ENCODE measurements at regions of chr22 and their contacts with region 1.

Region 1: GRCh38 chr22:38744981-38745380 is 10.8 kb downstream of the SUN2 start:
- DNase-seq: no peak
- H3K4me3 ChIP-seq: no peak overlapping the region
- CTCF ChIP-seq: no peak

Region 2: DNA sequence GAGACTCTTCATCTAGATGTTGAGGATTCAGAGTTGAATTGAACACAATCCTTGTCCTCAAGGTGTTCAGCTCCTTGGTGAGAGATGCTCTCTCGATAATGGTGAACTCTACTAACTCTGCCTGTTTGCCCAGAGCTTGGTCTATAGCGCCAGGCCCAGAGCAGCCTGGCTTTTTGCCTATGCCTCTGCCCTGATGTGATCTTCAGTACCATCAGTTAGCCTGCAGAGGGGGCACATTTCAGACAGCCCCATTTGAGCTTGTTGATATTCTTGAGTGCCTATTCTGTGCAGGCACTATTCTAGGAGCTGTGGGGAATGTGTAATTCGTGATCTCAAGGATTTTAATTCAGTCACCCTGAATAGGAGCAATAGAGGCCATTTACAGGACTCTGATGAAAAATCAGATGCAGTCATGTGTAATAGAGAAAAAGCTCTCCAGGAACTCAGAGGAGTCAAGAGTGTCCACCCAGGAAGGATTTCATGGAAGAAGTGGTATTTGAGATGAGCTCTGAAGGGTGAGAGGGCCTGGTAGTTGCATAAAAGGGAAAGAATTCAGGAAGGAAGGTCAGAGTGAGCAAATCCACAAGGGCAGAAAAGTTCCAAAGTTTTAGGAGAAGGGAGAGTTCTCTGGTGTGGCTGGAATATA is 19.9 kb before region 1 on chr22:
- CTCF ChIA-PET with region 1: interaction called, 12 read pairs
- POLR2A ChIA-PET with region 1: no interaction called
- DNase-seq: no peak
- H3K4me3 ChIP-seq: no peak overlapping the region
- CTCF ChIP-seq: peak; percentile 53

Region 3: GRCh38 chr22:38733329-38733723 is 11.7 kb before region 1 on chr22:
- CTCF ChIA-PET with region 1: interaction called, 26 read pairs
- POLR2A ChIA-PET with region 1: no interaction called
- DNase-seq: no peak
- H3K4me3 ChIP-seq: no peak overlapping the region
- CTCF ChIP-seq: peak; percentile 71

Measured in AG04449 (cell line).